ENCODE measurements at regions of chr6 and their contacts with region 1.

Region 1: GRCh38 chr6:33172688-33173534 is 19.4 kb downstream of the COL11A2 start:
- DNase-seq: no peak
- H3K4me3 ChIP-seq: no peak overlapping the region
- H3K27ac ChIP-seq: no peak overlapping the region
- H3K4me1 ChIP-seq: no peaks in the 10 kb centered on the region
- H3K27me3 ChIP-seq: no peaks in the 10 kb centered on the region
- CTCF ChIP-seq: peak; percentile 26 to 34
- POLR2A ChIP-seq: no peak

Region 2: DNA sequence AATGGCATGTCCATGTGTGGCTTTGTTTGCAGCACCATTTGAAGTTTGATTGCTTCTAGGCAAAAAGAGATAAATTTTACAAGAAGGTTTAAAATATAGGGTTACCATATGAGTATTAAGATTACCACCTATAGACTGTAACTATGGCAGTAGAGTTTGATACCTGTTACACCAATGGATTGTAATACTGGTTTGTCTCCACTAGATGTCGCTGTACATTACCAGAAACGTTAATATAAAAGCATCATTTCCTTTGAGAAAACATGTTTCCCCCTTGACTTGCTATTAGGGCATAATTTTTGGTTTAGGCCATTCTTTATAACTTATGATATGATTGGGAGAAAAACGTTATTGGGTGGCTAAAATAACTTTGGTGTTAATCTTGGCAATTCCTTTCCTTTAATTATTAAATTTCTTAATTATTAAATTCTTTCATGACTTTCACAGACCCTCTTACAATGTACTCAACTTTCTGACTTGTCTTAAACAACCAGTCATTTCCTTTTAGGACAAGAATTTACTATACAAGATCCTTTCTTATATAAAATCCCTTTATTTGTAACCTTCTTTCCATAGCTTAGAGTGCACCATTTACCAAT is 54.3 kb before region 1 on chr6:
- CTCF ChIA-PET with region 1: interaction called, 10 read pairs
- POLR2A ChIA-PET with region 1: no interaction called
- dilution Hi-C with region 1: no loop called
- intact Hi-C with region 1: no loop called
- DNase-seq: peak; percentile 57
- H3K4me3 ChIP-seq: no peak overlapping the region
- H3K27ac ChIP-seq: no peak overlapping the region
- H3K4me1 ChIP-seq: no peaks in the 10 kb centered on the region
- H3K27me3 ChIP-seq: peaks cover 44 to 46% of the 10 kb centered on the region in 2 experiments
- CTCF ChIP-seq: peak; percentile 38 to 48
- POLR2A ChIP-seq: no peak

Region 3: DNA sequence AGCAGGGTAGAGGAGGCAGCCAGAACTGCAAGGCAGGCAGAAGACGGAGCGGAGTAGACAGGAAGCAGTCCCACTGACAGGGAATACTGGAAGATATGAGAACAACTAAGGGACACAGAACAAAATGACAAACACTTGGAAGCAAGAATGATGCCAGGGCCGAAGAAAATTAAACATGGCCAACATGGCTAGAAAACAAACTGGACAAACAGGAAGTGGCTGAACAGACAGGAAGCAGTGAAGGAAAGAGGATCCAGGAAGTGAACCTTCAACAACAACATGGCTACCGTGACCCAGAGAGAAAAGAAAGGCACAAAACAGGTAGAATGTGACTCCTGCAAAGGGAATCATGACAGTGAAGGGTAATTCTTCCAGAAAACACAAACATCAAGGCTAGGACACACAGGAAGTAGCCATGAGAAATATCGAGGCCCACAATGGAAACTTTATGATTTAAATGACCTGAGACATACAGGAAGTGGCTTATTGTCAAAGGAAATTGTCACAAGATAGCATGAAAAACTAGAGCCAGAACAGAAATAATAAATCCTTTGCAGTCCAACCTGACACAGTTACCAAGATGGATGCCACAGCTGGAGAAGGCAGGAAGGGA is 10.3 kb after region 1 on chr6:
- CTCF ChIA-PET with region 1: no interaction called
- POLR2A ChIA-PET with region 1: no interaction called
- dilution Hi-C with region 1: no loop called
- intact Hi-C with region 1: no loop called
- DNase-seq: no peak
- H3K4me3 ChIP-seq: no peak overlapping the region
- H3K27ac ChIP-seq: no peak overlapping the region
- H3K4me1 ChIP-seq: peaks cover 7% of the 10 kb centered on the region
- H3K27me3 ChIP-seq: peaks cover 0 to 7% of the 10 kb centered on the region in 2 experiments
- CTCF ChIP-seq: no peak
- POLR2A ChIP-seq: no peak

Measured in endothelial cell of umbilical vein (primary cell).